CD4-positive, alpha-beta T cell (primary cell): ENCODE measurements at regions of chr3 and their contacts with region 1.

Region 1: GRCh38 chr3:30667280-30667651 is 60.9 kb downstream of the TGFBR2 start:
- DNase-seq: peak in 5 of 14 experiments; percentile 24 to 73 (median 66)
- ATAC-seq: peak; percentile 25
- H3K4me3 ChIP-seq: no peak overlapping the region
- H3K4me3 Mint-ChIP-seq: peak overlapping the region; percentile 66
- H3K27ac ChIP-seq: peak overlapping the region; percentile 46 to 71
- H3K27ac Mint-ChIP-seq: peak overlapping the region; percentile 86
- H3K4me1 ChIP-seq: peaks cover 63% of the 10 kb centered on the region
- H3K4me1 Mint-ChIP-seq: peaks cover 98% of the 10 kb centered on the region
- H3K27me3 ChIP-seq: no peaks in the 10 kb centered on the region
- H3K27me3 Mint-ChIP-seq: no peaks in the 10 kb centered on the region
- CTCF ChIP-seq: no peak

Region 2: GRCh38 chr3:30241721-30242120 is 425.5 kb before region 1 on chr3:
- CTCF ChIA-PET with region 1: no interaction called
- POLR2A ChIA-PET with region 1: no interaction called
- intact Hi-C with region 1: no loop called
- DNase-seq: no peak
- ATAC-seq: no peak
- H3K4me3 ChIP-seq: no peak overlapping the region
- H3K4me3 Mint-ChIP-seq: no peak overlapping the region
- H3K27ac ChIP-seq: no peak overlapping the region
- H3K27ac Mint-ChIP-seq: no peak overlapping the region
- H3K4me1 ChIP-seq: no peaks in the 10 kb centered on the region
- H3K4me1 Mint-ChIP-seq: no peaks in the 10 kb centered on the region
- H3K27me3 ChIP-seq: no peaks in the 10 kb centered on the region
- H3K27me3 Mint-ChIP-seq: peaks cover 13% of the 10 kb centered on the region
- CTCF ChIP-seq: no peak

Region 3: DNA sequence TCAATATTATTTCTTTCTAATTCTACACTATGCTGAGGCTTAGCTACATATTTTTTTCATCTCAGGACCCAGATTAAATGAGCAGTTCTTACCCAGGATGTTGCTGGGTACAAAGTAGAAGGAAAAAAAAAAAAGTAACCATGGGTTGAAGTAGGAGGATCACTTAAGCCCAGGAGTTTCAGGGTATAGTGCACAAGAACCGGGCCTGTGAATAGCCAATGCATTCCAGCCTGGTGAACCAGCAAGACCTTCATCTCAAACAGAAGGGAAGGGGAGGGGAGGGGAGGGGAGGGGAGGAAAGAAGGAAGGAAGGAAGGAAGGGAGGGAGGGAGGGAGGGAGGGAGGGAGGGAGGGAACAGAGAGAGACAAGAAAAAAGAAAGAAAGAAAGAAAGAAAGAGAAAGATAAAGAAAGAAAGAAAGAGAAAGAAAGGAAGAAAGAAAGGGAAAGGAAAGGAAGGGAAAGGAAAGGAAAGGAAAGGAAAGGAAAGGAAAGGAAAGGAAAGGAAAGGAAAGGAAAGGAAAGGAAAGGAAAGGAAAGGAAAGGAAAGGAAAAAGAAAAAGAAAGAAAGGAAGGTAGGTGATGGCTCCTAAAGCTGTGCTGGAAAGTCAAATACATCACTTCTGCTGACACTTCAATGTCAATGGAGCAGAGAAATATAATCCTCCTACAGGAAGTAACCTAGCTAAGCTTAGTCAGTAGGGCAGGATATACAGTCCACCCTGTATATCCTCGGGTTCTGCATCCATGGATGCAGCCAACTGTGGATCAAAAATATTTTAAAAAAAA is 267.7 kb before region 1 on chr3:
- CTCF ChIA-PET with region 1: no interaction called
- POLR2A ChIA-PET with region 1: no interaction called
- intact Hi-C with region 1: no loop called
- DNase-seq: no peak
- ATAC-seq: no peak
- H3K4me3 ChIP-seq: no peak overlapping the region
- H3K4me3 Mint-ChIP-seq: no peak overlapping the region
- H3K27ac ChIP-seq: no peak overlapping the region
- H3K27ac Mint-ChIP-seq: no peak overlapping the region
- H3K4me1 ChIP-seq: no peaks in the 10 kb centered on the region
- H3K4me1 Mint-ChIP-seq: peaks cover 20% of the 10 kb centered on the region
- H3K27me3 ChIP-seq: no peaks in the 10 kb centered on the region
- H3K27me3 Mint-ChIP-seq: no peaks in the 10 kb centered on the region
- CTCF ChIP-seq: no peak

Region 4: DNA sequence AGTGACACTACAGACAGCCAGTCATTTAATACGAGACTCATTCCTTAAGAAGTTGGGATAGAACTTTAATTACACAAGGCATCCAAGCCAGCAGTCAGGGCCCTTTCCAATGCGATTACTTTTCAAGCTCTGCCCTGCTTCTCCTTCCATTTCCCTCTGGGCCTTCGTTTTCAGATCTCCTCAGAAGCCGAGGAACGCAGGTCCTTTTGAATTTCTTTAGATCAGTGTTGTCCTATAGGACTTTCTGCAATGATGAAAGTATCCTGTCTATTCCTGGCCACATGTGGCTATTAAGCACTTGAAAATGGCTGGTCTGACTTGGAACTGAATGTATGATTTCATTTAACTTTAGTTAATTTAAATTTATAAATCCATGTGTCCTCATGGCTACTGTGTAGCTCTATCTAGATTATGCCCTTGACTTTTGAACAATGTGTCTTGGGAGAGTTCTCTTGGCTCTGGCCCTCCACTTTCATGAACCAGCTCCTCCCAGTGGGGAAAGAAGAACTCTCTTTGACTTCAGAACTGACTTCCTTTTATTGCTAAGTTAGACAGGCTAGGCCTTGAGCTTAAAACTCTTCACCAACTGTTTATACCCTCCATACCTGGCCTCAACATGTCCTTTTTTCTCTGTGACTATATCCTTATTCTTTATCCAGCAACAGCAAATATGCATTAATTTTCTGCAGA is 38.2 kb before region 1 on chr3:
- CTCF ChIA-PET with region 1: interaction called, 3 read pairs
- POLR2A ChIA-PET with region 1: interaction called, 33 read pairs
- intact Hi-C with region 1: loop called in 1 of 2 experiments (anchors 2 kb)
- DNase-seq: peak in 4 of 14 experiments; percentile 43 to 75 (median 73)
- ATAC-seq: peak; percentile 32
- H3K4me3 ChIP-seq: no peak overlapping the region
- H3K4me3 Mint-ChIP-seq: peak overlapping the region; percentile 68
- H3K27ac ChIP-seq: peak overlapping the region; percentile 77 to 90
- H3K27ac Mint-ChIP-seq: peak overlapping the region; percentile 96
- H3K4me1 ChIP-seq: peaks cover 74% of the 10 kb centered on the region
- H3K4me1 Mint-ChIP-seq: peaks cover 100% of the 10 kb centered on the region
- H3K27me3 ChIP-seq: no peaks in the 10 kb centered on the region
- H3K27me3 Mint-ChIP-seq: no peaks in the 10 kb centered on the region
- CTCF ChIP-seq: peak; percentile 40

Region 5: GRCh38 chr3:30634761-30635735 is 32.2 kb before region 1 on chr3:
- CTCF ChIA-PET with region 1: no interaction called
- POLR2A ChIA-PET with region 1: interaction called, 33 read pairs
- intact Hi-C with region 1: loop called in 1 of 2 experiments (anchors 2 kb)
- DNase-seq: no peak
- ATAC-seq: peak; percentile 8
- H3K4me3 ChIP-seq: no peak overlapping the region
- H3K4me3 Mint-ChIP-seq: peak overlapping the region; percentile 42
- H3K27ac ChIP-seq: peak overlapping the region; percentile 57 to 77
- H3K27ac Mint-ChIP-seq: peak overlapping the region; percentile 96
- H3K4me1 ChIP-seq: peaks cover 77% of the 10 kb centered on the region
- H3K4me1 Mint-ChIP-seq: peaks cover 100% of the 10 kb centered on the region
- H3K27me3 ChIP-seq: no peaks in the 10 kb centered on the region
- H3K27me3 Mint-ChIP-seq: no peaks in the 10 kb centered on the region
- CTCF ChIP-seq: no peak

Region 6: GRCh38 chr3:30644593-30645012 is 22.7 kb before region 1 on chr3:
- CTCF ChIA-PET with region 1: interaction called, 4 read pairs
- POLR2A ChIA-PET with region 1: interaction called, 12 read pairs
- intact Hi-C with region 1: no loop called
- DNase-seq: peak in 10 of 14 experiments; percentile 26 to 87 (median 50)
- ATAC-seq: peak; percentile 62
- H3K4me3 ChIP-seq: peak overlapping the region; percentile 14
- H3K4me3 Mint-ChIP-seq: peak overlapping the region; percentile 79
- H3K27ac ChIP-seq: peak overlapping the region; percentile 72 to 76
- H3K27ac Mint-ChIP-seq: peak overlapping the region; percentile 96
- H3K4me1 ChIP-seq: peaks cover 85% of the 10 kb centered on the region
- H3K4me1 Mint-ChIP-seq: peaks cover 99% of the 10 kb centered on the region
- H3K27me3 ChIP-seq: no peaks in the 10 kb centered on the region
- H3K27me3 Mint-ChIP-seq: no peaks in the 10 kb centered on the region
- CTCF ChIP-seq: no peak

Region 7: DNA sequence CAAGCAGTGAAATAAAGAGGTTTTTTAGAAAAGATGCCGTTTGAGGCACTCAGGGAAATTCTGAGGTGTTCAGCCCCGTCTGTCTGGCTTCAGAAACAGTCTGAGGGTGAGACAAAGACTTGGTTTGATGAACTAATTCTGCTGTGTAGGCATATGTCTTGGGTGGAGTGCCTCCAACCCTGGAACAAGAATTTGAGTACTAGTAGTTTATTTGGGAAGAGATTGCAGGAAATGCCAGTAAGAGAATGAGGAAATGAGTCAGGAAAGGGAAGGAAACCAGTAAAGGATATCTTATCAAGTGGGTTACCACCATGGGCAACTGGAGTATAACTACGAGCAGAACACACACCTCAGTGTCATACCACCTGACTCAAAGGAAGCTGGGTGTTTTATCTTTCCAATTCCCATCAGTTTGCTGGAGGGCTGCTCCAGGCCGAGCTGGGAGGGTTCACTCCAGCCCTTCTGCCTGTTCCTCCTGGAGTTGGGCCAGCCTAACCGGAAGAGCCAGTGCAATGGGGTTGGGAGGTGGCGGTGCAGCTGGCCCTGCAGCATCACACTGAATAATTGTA is 14.5 kb after region 1 on chr3:
- CTCF ChIA-PET with region 1: interaction called, 6 read pairs
- POLR2A ChIA-PET with region 1: interaction called, 33 read pairs
- intact Hi-C with region 1: no loop called
- DNase-seq: no peak
- ATAC-seq: peak; percentile 53
- H3K4me3 ChIP-seq: no peak overlapping the region
- H3K4me3 Mint-ChIP-seq: peak overlapping the region; percentile 57
- H3K27ac ChIP-seq: peak overlapping the region; percentile 13 to 19
- H3K27ac Mint-ChIP-seq: peak overlapping the region; percentile 86
- H3K4me1 ChIP-seq: peaks cover 52% of the 10 kb centered on the region
- H3K4me1 Mint-ChIP-seq: peaks cover 95% of the 10 kb centered on the region
- H3K27me3 ChIP-seq: no peaks in the 10 kb centered on the region
- H3K27me3 Mint-ChIP-seq: no peaks in the 10 kb centered on the region
- CTCF ChIP-seq: no peak